HEK293 (cell line): ENCODE measurements at regions of chr12 and their contacts with region 1.

Region 1: DNA sequence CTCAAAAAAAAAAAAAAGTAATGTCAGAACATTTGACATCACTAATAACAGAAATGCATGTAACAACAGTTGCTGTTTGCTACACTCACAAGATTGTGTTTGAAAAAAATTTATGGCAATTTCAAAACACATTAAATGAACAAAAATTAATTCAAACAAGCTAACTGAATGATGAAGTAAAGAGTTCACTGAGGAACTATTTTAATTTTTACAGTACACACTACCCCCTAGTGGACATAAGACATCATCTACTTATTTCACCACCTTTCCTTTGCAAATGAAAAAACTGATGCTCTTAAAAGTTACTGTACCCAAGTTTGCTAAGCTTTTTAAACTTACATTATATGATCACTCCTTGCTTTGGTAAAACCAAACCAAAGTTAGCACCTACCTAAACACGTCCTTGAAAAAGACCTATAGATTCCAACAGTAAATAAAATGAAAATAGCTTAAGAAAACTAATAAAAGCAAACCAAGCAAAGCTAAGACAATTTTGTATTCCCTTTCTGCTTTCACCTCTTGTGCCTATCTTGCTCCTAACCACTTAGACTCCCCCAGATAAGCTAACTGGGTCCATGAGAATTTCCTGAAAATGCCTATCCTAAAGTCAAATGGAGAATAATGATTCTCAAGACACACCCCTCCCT is 22.2 kb downstream of the UBE2N start:
- H3K4me3 ChIP-seq: no peak overlapping the region
- H3K27ac ChIP-seq: no peak overlapping the region
- H3K4me1 ChIP-seq: peaks cover 19% of the 10 kb centered on the region; the same call in 1 of the 2 replicates
- CTCF ChIP-seq: no peak

Region 2: GRCh38 chr12:93378373-93379325 is 40.9 kb before region 1 on chr12:
- CTCF ChIA-PET with region 1: interaction called, 10 read pairs
- POLR2A ChIA-PET with region 1: no interaction called
- H3K4me3 ChIP-seq: peak overlapping the region; percentile 75
- H3K27ac ChIP-seq: peak overlapping the region; percentile 74
- H3K4me1 ChIP-seq: peaks cover 10% of the 10 kb centered on the region
- CTCF ChIP-seq: no peak

Region 3: GRCh38 chr12:93440043-93440835 is 20.7 kb after region 1 on chr12:
- CTCF ChIA-PET with region 1: interaction called, 11 read pairs
- POLR2A ChIA-PET with region 1: no interaction called
- H3K4me3 ChIP-seq: peak overlapping the region; percentile 97
- H3K27ac ChIP-seq: no peak overlapping the region
- H3K4me1 ChIP-seq: peaks cover 27% of the 10 kb centered on the region
- CTCF ChIP-seq: no peak

Region 4: GRCh38 chr12:93453633-93454032 is 34.1 kb after region 1 on chr12:
- CTCF ChIA-PET with region 1: no interaction called
- POLR2A ChIA-PET with region 1: no interaction called
- H3K4me3 ChIP-seq: no peak overlapping the region
- H3K27ac ChIP-seq: no peak overlapping the region
- H3K4me1 ChIP-seq: no peaks in the 10 kb centered on the region
- CTCF ChIP-seq: no peak

Region 5: GRCh38 chr12:93467351-93468007 is 48.0 kb after region 1 on chr12 and contains the start of gene MRPL42:
- CTCF ChIA-PET with region 1: interaction called, 10 read pairs
- POLR2A ChIA-PET with region 1: no interaction called
- H3K4me3 ChIP-seq: peak within 1 kb of the TSS; percentile 94
- H3K27ac ChIP-seq: peak within 1 kb of the TSS; percentile 79
- H3K4me1 ChIP-seq: no peaks in the 10 kb centered on the region
- CTCF ChIP-seq: peak; percentile 99

Region 6: GRCh38 chr12:93603762-93604161 is 184.3 kb after region 1 on chr12:
- CTCF ChIA-PET with region 1: no interaction called
- POLR2A ChIA-PET with region 1: no interaction called
- H3K4me3 ChIP-seq: no peak overlapping the region
- H3K27ac ChIP-seq: no peak overlapping the region
- H3K4me1 ChIP-seq: no peaks in the 10 kb centered on the region
- CTCF ChIP-seq: no peak